CD8-positive, alpha-beta memory T cell (primary cell): ENCODE measurements at regions of chr17 and their contacts with region 1.

Region 1: DNA sequence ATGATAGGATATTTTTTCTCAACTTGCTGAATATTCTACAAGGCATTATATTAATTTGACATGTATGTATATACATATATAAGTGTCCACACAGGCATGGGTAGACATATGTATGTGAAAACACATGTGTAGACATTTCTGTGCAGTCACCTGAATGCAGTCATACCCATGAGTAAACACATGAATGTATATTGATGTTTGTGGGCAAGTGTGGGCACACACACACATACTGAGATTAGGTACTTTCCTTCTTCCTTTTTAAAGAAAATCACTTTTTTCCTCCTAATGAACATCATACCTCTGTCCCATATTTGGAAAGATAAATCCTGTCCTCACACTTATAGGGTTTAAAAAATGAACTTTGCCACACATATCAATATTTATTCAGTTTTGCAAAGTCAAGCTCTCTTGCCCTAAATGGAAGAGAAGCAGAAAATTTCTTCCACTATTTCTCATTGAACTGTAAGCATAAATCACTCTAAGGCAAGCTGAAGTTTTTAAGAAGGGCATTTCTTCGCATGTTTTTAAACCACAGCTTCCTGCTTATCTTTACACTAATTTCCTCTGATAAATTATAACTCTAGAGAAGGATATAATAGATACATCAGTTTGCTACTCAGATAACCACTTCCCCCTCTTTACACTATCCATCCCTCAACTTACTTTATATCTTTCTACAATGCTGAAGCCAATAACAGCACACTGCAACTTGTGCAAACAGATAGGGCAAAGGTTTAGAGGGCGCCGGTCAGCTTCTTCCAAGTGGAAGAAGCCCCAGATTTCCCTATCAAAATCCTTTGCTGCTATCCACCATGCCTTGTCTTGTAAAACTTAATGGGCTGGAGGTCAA is 49.6 kb upstream of the LRRC37A3 start:
- DNase-seq: peak in 1 of 5 donors; percentile 56
- H3K4me3 ChIP-seq: peak overlapping the region; percentile 34
- H3K4me3 Mint-ChIP-seq: peak overlapping the region; percentile 57 to 82 (median 79)
- H3K27ac ChIP-seq: peak overlapping the region; percentile 45
- H3K27ac Mint-ChIP-seq: peak overlapping the region; percentile 89 to 98 (median 97)
- H3K4me1 ChIP-seq: peaks cover 66% of the 10 kb centered on the region
- H3K4me1 Mint-ChIP-seq: peaks cover 61 to 87% (median 86%) of the 10 kb centered on the region in 3 donors
- H3K27me3 ChIP-seq: no peaks in the 10 kb centered on the region
- H3K27me3 Mint-ChIP-seq: no peaks in the 10 kb centered on the region

Region 2: DNA sequence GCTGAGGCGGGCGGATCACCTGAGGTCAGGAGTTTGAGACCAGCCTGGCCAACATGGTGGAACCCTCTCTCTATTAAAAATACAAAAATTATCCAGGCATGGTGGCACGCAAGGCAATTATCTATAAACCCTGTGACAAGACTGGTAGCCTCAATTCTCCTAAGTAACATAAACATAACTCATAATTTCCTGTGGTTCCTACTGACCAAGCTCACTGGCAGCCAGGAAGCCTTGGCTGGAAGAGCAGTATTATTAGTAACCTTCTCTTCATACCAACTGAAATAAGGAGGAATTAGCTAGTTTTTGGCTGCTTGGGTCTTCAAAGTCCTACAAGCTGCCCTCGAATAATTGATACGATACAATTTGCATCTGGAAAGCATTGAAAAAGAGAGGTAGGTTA is 18.0 kb before region 1 on chr17:
- CTCF ChIA-PET with region 1: no interaction called
- POLR2A ChIA-PET with region 1: no interaction called
- DNase-seq: no peak
- H3K4me3 ChIP-seq: no peak overlapping the region
- H3K4me3 Mint-ChIP-seq: no peak overlapping the region
- H3K27ac ChIP-seq: no peak overlapping the region
- H3K27ac Mint-ChIP-seq: no peak overlapping the region
- H3K4me1 ChIP-seq: no peaks in the 10 kb centered on the region
- H3K4me1 Mint-ChIP-seq: no peaks in the 10 kb centered on the region
- H3K27me3 ChIP-seq: no peaks in the 10 kb centered on the region
- H3K27me3 Mint-ChIP-seq: no peaks in the 10 kb centered on the region

Region 3: DNA sequence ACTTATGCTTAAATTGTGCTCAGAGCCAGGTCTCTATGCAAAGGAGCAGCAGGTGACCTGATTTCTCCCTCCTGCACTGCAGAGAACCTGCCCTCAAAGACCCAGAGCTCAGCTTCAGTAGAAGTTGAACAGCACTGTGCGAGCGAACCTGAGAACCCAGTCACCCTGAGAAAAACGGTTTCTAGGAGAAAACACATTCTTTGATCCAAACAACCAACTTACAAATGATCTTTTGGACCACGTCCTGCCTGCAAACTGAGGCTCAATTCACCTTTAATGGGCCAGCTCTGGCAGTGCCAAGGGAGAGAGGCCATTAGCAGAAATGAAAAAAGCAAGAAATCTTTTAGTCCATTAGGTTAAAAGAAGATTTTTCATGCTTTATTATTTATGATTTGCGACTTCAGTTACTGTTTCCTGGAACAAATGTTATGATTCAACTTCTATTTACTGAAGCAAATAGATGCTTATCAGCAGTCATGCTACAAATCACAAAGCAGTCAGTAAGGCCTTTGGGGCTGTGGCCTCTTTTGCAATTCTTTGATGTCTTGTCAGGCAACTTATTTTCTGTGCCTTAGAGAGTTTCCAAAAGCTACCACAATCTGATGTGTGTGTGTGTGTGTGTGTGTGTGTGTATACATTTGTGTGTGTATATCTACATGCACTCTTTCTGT is 16.1 kb after region 1 on chr17:
- CTCF ChIA-PET with region 1: interaction called, 12 read pairs
- POLR2A ChIA-PET with region 1: interaction called, 9 read pairs
- DNase-seq: peak; percentile 32 to 82 (median 64)
- H3K4me3 ChIP-seq: peak overlapping the region; percentile 60
- H3K4me3 Mint-ChIP-seq: peak overlapping the region; percentile 39 to 89 (median 80)
- H3K27ac ChIP-seq: peak overlapping the region; percentile 95
- H3K27ac Mint-ChIP-seq: peak overlapping the region; percentile 98 to 100 (median 99)
- H3K4me1 ChIP-seq: peaks cover 39% of the 10 kb centered on the region
- H3K4me1 Mint-ChIP-seq: peaks cover 34 to 48% (median 43%) of the 10 kb centered on the region in 3 donors
- H3K27me3 ChIP-seq: no peaks in the 10 kb centered on the region
- H3K27me3 Mint-ChIP-seq: peaks cover 0 to 1% of the 10 kb centered on the region in 2 donors

Region 4: DNA sequence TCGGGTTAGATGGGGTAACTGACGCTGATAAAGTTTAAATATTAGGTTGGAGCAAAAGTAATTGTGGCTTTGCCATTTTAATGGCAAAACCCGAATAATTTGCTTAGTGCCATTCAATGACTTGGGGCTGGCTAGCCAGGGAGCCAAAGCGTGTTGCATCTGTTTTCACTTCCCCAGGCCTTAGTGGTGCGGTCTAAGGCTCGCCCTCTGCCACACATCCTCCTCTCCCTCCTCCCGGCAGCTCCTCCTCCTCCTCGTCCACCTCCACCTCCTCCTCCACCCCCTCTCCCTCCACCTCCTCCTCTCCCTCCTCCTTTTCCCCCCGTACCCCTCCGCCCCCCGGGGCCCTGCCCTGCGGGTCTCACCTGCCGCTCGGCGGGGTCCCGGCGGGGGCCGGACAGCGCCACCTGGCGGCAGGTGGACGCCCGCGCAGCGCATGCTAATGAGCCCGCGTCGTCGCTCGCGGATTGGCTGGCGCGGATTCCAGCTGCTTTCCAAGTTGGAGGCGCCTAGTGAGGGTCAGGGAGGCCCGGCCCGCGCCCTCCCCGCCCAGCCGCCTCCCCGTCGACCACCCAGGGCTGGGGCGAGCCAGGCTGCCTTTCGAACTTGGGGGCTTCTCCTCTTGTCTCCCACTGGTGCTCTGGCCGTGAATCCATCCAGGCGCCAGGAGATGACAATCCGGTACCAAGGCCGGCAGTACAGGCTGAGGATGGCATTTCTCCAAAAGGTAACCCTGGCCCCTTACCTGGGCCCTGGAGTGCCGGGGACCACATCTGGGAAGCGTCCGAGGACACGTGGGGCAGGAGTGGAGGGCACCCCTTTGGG is 131.7 kb after region 1 on chr17:
- CTCF ChIA-PET with region 1: interaction called, 13 read pairs
- POLR2A ChIA-PET with region 1: interaction called, 7 read pairs
- DNase-seq: peak; percentile 79 to 88 (median 82)
- H3K4me3 ChIP-seq: peak overlapping the region; percentile 95
- H3K4me3 Mint-ChIP-seq: peak overlapping the region; percentile 87 to 92 (median 90)
- H3K27ac ChIP-seq: peak overlapping the region; percentile 70
- H3K27ac Mint-ChIP-seq: peak overlapping the region; percentile 75 to 96 (median 90)
- H3K4me1 ChIP-seq: peaks cover 11% of the 10 kb centered on the region
- H3K4me1 Mint-ChIP-seq: peaks cover 16 to 30% (median 21%) of the 10 kb centered on the region in 3 donors
- H3K27me3 ChIP-seq: no peaks in the 10 kb centered on the region
- H3K27me3 Mint-ChIP-seq: peaks cover 0 to under 1% of the 10 kb centered on the region in 2 donors